Cardiac septum (tissue), 1 donor: ENCODE measurements at regions of chr2 and their contacts with region 1.

Region 1: GRCh38 chr2:237864940-237865622 is 5.7 kb downstream of the RAMP1 start:
- DNase-seq: no peak

Region 2: GRCh38 chr2:237904801-237905599 is 39.9 kb after region 1 on chr2:
- intact Hi-C with region 1: loop called (anchors 2 kb)
- DNase-seq: peak; percentile 80